MCF 10A (cell line): ENCODE measurements at regions of chr2 and their contacts with region 1.

Region 1: DNA sequence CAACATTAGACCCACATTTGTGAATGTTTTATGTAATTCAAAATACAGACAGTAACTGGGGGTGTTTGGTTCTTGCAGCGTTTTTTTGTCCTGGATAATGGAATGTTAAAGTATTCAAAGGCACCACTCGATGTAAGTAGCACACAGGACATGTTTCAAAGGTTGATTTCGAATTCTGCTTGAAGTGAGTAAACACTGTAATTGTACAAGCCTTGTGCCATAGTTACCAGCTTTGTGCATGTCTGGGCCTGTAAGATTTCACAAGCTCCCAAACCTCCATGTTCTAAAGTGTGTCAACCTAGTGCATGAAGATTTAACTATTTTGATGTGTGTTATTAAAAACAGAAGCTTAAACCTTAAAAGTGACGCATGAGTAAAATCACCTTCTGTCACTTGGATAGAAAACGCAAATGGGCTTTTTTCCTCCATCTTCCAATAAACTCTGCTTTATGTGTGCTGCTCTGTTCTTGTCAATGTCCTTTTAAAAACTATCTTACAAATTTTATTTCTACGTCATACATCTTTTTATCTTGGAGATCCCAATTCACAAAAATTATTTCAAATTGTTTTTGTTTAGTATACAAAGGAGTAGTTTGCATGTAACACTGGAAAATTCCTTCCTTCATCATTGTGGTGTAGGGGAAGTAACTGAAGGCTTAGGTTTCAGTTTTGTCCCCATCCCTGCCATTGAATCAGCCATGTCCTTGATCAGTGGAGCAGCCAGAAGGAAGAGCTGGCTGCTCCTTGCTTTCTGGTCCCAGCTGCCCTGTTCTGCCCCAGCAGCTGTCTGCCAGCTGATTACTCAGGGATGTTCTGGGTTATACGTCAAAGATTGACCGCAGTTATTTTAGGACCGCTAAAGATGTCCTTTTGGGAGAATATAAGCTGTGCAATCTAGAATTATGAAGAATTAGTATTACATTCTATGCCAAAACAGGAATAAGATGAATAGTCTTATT is 119.2 kb downstream of the PRKRA start:
- DNase-seq: peak; percentile 86
- H3K4me3 Mint-ChIP-seq: peak overlapping the region; percentile 22
- H3K27ac Mint-ChIP-seq: peak overlapping the region; percentile 82
- H3K4me1 Mint-ChIP-seq: peaks cover 9% of the 10 kb centered on the region
- H3K27me3 Mint-ChIP-seq: no peaks in the 10 kb centered on the region
- CTCF ChIP-seq: no peak

Region 2: DNA sequence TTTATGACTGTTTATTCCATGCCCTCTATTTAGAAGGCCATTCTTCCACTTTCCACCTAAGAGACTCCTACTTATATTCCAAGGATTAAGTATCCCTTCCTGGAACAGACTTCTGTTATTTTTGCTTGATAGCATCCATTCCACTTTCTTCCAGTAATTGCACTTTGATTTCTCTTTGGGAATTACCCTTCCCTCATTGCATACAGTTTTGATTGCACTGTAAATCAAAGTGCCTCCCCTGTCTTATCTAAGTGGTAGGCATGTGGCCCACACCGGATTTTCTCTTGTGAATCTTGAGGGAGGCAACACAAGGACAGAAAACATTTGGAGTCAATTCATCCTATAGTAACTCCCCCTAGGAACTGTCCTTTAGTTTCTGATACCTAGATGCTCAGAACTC is 379.6 kb before region 1 on chr2:
- CTCF ChIA-PET with region 1: no interaction called
- POLR2A ChIA-PET with region 1: no interaction called
- intact Hi-C with region 1: no loop called
- DNase-seq: no peak
- H3K4me3 Mint-ChIP-seq: no peak overlapping the region
- H3K27ac Mint-ChIP-seq: no peak overlapping the region
- H3K4me1 Mint-ChIP-seq: no peaks in the 10 kb centered on the region
- H3K27me3 Mint-ChIP-seq: no peaks in the 10 kb centered on the region
- CTCF ChIP-seq: no peak

Region 3: DNA sequence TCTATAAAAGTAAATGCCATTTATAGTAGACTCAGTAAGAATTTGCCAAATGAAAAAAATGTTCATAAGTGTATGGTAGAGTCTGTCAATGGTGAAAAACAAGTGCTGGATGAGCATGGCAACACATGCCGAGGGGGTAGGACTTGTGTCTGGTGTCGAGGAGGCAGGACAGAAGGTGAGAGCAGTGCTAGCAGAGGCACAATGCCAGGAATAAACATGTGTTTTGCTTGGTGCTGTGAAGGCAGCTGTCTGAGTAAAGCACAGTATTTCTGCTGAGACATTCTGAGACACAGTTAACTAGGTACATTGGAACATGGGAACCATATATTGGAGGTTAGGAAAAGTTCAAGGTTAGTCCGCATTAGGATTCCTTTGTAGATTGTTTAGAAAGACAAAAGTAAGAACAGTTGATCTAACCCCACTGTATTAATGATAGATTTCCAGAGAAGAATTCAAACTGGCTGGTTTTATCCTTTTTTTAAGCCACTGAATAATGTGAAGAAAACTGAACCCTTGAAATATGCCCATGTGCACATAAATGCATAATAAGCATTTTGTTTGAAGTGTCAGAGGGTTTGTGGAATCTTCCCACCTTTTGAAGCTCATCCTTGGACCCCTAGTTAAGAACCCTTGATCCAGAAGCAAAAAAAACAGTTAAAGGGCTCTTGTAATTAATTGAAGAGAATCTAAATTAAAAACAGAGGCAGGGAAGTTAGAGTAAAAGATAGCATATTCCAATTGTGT is 212.4 kb before region 1 on chr2:
- CTCF ChIA-PET with region 1: no interaction called
- POLR2A ChIA-PET with region 1: no interaction called
- intact Hi-C with region 1: no loop called
- DNase-seq: no peak
- H3K4me3 Mint-ChIP-seq: no peak overlapping the region
- H3K27ac Mint-ChIP-seq: peak overlapping the region; percentile 40
- H3K4me1 Mint-ChIP-seq: no peaks in the 10 kb centered on the region
- H3K27me3 Mint-ChIP-seq: no peaks in the 10 kb centered on the region
- CTCF ChIP-seq: no peak

Region 4: DNA sequence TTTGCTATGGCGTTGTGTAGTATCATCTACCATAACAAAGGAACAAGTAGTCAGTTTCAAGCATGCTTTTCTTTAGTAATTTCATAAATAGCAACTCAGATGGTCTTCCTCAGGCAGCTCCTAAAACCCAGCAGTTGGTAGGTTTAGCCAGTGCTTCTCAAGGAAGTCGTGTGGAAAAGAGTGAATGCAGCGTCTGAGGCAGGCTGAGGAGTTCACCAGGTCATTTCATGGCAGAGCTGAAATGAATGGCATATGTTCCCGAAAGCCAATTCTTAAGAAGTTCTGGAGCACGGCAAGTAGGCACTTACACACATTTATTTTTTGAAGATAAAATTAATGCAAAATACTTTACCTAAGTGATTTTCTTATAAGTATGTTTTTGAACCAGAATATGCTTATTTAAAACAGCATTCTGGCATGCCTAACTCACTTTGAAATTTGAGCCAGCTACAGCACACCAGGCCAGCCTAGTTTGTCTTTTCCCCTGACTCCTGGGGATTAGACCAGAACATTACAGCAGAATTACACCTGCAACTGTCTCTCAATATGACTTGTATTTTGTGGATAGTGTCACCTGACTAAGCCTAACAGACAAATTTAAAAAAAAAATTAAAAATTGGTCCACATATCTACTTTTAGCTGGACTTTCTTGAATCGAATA is 75.2 kb before region 1 on chr2:
- CTCF ChIA-PET with region 1: no interaction called
- POLR2A ChIA-PET with region 1: no interaction called
- intact Hi-C with region 1: no loop called
- DNase-seq: no peak
- H3K4me3 Mint-ChIP-seq: no peak overlapping the region
- H3K27ac Mint-ChIP-seq: no peak overlapping the region
- H3K4me1 Mint-ChIP-seq: peaks cover 15% of the 10 kb centered on the region
- H3K27me3 Mint-ChIP-seq: no peaks in the 10 kb centered on the region
- CTCF ChIP-seq: no peak

Region 5: GRCh38 chr2:178306352-178307073 is 25.2 kb before region 1 on chr2:
- CTCF ChIA-PET with region 1: interaction called, 4 read pairs
- POLR2A ChIA-PET with region 1: interaction called, 10 read pairs
- intact Hi-C with region 1: no loop called
- DNase-seq: peak; percentile 70
- H3K4me3 Mint-ChIP-seq: no peak overlapping the region
- H3K27ac Mint-ChIP-seq: no peak overlapping the region
- H3K4me1 Mint-ChIP-seq: peaks cover 16% of the 10 kb centered on the region
- H3K27me3 Mint-ChIP-seq: no peaks in the 10 kb centered on the region
- CTCF ChIP-seq: peak; percentile 54

Region 6: GRCh38 chr2:178320011-178320585 is 11.7 kb before region 1 on chr2:
- CTCF ChIA-PET with region 1: interaction called, 6 read pairs
- POLR2A ChIA-PET with region 1: interaction called, 30 read pairs
- intact Hi-C with region 1: no loop called
- DNase-seq: no peak
- H3K4me3 Mint-ChIP-seq: no peak overlapping the region
- H3K27ac Mint-ChIP-seq: no peak overlapping the region
- H3K4me1 Mint-ChIP-seq: no peaks in the 10 kb centered on the region
- H3K27me3 Mint-ChIP-seq: no peaks in the 10 kb centered on the region
- CTCF ChIP-seq: no peak

Region 7: DNA sequence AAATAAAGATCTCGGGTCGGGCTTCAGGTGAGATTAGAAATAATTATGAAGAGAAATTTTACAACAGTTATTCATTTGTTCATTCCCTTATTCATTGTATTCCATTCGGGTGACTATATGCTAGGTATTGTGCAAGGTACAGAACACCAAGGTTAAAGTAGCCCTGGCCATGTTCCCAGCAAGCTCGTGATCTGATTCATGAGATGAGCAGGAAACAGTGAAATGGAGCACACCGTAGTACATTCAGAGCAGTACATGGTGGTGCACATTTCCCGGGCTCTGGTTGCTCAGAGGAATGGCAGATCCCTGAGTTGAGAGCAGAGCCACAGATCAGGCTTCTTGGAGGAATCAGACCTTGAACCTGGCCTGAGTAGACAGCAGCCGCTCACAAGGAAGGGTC is 31.5 kb after region 1 on chr2:
- CTCF ChIA-PET with region 1: interaction called, 3 read pairs
- POLR2A ChIA-PET with region 1: interaction called, 14 read pairs
- intact Hi-C with region 1: no loop called
- DNase-seq: peak; percentile 92
- H3K4me3 Mint-ChIP-seq: peak overlapping the region; percentile 46
- H3K27ac Mint-ChIP-seq: peak overlapping the region; percentile 52
- H3K4me1 Mint-ChIP-seq: peaks cover 18% of the 10 kb centered on the region
- H3K27me3 Mint-ChIP-seq: no peaks in the 10 kb centered on the region
- CTCF ChIP-seq: no peak